GM12878 (cell line): ENCODE measurements at regions of chr3 and their contacts with region 1.

Region 1: GRCh38 chr3:27712136-27713077 is 9.7 kb downstream of the EOMES start:
- DNase-seq: no peak
- ATAC-seq: peak; percentile 86
- H3K4me3 ChIP-seq: peak overlapping the region; percentile 71
- H3K27ac ChIP-seq: no peak overlapping the region
- H3K4me1 ChIP-seq: no peaks in the 10 kb centered on the region
- H3K27me3 ChIP-seq: peaks cover 2 to 24% of the 10 kb centered on the region in 2 experiments
- CTCF ChIP-seq: peak; percentile 69 to 88 (median 84)
- EP300 ChIP-seq: no peak; a peak in 1 of 4 replicates
- POLR2A ChIP-seq: no peak
- RAD21 ChIP-seq: peak; percentile 87

Region 2: GRCh38 chr3:27681245-27681748 is 31.1 kb before region 1 on chr3:
- CTCF ChIA-PET with region 1: interaction called, 11 read pairs
- POLR2A ChIA-PET with region 1: interaction called, 3 read pairs
- RAD21 ChIA-PET with region 1: interaction called, 10 read pairs
- SMC1A ChIA-PET with region 1: interaction called, 15 read pairs
- in situ Hi-C with region 1: no loop called
- intact Hi-C with region 1: no loop called
- DNase-seq: peak; percentile 38
- ATAC-seq: peak; percentile 87
- H3K4me3 ChIP-seq: no peak overlapping the region
- H3K27ac ChIP-seq: no peak overlapping the region
- H3K4me1 ChIP-seq: no peaks in the 10 kb centered on the region
- H3K27me3 ChIP-seq: no peaks in the 10 kb centered on the region
- CTCF ChIP-seq: peak; percentile 47 to 79 (median 61)
- EP300 ChIP-seq: no peak
- POLR2A ChIP-seq: no peak
- RAD21 ChIP-seq: peak; percentile 91

Region 3: DNA sequence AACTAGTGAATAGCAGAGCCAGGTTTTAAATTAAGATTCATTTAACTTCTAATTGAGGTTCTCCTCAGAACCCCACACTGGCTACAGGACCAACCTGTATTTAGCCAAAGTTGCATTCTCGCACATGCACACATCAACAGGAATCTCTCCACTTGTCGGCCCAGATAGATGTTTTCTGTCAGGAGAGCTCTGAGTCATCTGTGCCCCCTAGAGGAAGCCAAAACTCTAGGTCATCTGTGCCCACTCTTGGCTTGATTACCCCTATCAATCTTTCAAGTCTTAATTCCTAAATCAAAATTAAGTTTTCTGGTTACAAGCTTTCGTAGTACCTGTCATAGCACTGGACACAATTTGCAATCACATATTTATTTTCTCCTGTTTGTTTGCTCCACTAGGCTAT is 114.6 kb after region 1 on chr3:
- CTCF ChIA-PET with region 1: interaction called, 4 read pairs
- POLR2A ChIA-PET with region 1: no interaction called
- RAD21 ChIA-PET with region 1: interaction called, 10 read pairs
- SMC1A ChIA-PET with region 1: interaction called, 3 read pairs
- in situ Hi-C with region 1: no loop called
- intact Hi-C with region 1: no loop called
- DNase-seq: no peak
- ATAC-seq: peak; percentile 48; the same call in 2 of the 3 replicates
- H3K4me3 ChIP-seq: no peak overlapping the region
- H3K27ac ChIP-seq: no peak overlapping the region
- H3K4me1 ChIP-seq: no peaks in the 10 kb centered on the region
- H3K27me3 ChIP-seq: no peaks in the 10 kb centered on the region
- CTCF ChIP-seq: no peak; a peak in 1 of 6 replicates
- EP300 ChIP-seq: no peak
- POLR2A ChIP-seq: no peak
- RAD21 ChIP-seq: no peak

Region 4: DNA sequence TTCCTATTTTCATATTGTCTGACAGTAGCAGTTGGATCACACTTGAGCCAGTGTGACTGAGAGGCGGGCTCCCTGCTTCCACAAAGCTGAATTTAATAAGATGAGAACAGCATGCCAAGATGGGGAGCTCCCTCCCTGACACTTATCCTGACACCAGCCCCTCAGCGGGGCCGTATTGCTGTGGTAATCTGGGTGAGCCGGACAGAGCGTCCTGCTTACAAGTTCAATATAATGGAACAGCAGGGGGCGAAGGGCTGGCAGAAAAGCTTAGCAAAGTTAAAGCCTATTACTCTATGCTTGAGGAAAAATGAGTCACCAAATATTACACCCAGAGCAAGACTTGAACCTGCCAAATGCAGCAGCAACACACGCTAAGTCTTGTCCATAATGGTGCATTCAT is 365.2 kb after region 1 on chr3:
- CTCF ChIA-PET with region 1: interaction called, 7 read pairs
- POLR2A ChIA-PET with region 1: no interaction called
- RAD21 ChIA-PET with region 1: interaction called, 12 read pairs
- SMC1A ChIA-PET with region 1: interaction called, 9 read pairs
- in situ Hi-C with region 1: no loop called
- intact Hi-C with region 1: no loop called
- DNase-seq: no peak
- ATAC-seq: no peak
- H3K4me3 ChIP-seq: no peak overlapping the region
- H3K27ac ChIP-seq: no peak overlapping the region
- H3K4me1 ChIP-seq: no peaks in the 10 kb centered on the region
- H3K27me3 ChIP-seq: no peaks in the 10 kb centered on the region
- CTCF ChIP-seq: no peak
- EP300 ChIP-seq: no peak
- POLR2A ChIP-seq: no peak
- RAD21 ChIP-seq: no peak

Region 5: DNA sequence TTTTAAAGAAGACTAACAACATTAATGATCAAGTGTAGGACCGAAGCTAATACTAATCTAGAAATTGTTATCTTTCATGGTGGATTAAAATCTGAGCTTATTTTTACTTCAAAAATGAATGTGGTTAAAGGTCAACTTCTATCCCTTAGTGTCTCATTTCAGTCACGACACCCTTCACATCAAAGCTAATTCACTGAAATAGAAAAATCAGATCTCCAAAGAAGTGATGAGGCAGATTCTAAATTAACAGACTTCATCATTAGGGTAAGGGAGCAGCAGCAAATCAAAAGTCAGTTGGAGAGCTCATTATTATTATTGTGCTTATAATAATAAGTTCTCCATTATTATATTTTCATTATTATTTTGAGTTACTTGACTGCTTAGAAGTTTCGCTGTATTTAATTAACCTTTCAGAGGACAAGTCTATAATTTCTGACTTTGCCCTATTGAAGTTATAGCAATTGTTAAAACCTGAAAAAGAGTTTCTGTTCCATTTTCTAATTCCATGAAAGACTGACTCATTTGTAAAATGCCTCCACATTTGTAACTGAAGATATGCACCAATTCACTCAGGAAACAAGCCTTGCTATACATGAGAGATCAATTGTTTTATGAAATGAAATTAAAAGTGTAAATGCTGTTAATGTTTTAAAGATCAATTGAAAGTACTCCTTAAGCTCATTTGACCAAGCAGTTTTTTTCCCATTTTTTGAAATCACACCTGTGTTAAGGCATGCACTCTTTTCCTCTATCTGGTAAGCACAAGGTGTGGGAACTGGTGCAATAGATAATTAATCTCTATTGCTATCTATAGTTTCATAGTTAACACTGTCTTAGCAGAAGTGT is 505.9 kb after region 1 on chr3:
- CTCF ChIA-PET with region 1: interaction called, 4 read pairs
- POLR2A ChIA-PET with region 1: interaction called, 3 read pairs
- RAD21 ChIA-PET with region 1: interaction called, 15 read pairs
- SMC1A ChIA-PET with region 1: interaction called, 10 read pairs
- in situ Hi-C with region 1: no loop called
- intact Hi-C with region 1: no loop called
- DNase-seq: peak; percentile 28
- ATAC-seq: peak; percentile 91
- H3K4me3 ChIP-seq: no peak overlapping the region
- H3K27ac ChIP-seq: no peak overlapping the region
- H3K4me1 ChIP-seq: no peaks in the 10 kb centered on the region
- H3K27me3 ChIP-seq: no peaks in the 10 kb centered on the region
- CTCF ChIP-seq: no peak
- EP300 ChIP-seq: peak; percentile 78 to 88; a peak in 3 of 4 replicates
- POLR2A ChIP-seq: no peak
- RAD21 ChIP-seq: no peak

Region 6: DNA sequence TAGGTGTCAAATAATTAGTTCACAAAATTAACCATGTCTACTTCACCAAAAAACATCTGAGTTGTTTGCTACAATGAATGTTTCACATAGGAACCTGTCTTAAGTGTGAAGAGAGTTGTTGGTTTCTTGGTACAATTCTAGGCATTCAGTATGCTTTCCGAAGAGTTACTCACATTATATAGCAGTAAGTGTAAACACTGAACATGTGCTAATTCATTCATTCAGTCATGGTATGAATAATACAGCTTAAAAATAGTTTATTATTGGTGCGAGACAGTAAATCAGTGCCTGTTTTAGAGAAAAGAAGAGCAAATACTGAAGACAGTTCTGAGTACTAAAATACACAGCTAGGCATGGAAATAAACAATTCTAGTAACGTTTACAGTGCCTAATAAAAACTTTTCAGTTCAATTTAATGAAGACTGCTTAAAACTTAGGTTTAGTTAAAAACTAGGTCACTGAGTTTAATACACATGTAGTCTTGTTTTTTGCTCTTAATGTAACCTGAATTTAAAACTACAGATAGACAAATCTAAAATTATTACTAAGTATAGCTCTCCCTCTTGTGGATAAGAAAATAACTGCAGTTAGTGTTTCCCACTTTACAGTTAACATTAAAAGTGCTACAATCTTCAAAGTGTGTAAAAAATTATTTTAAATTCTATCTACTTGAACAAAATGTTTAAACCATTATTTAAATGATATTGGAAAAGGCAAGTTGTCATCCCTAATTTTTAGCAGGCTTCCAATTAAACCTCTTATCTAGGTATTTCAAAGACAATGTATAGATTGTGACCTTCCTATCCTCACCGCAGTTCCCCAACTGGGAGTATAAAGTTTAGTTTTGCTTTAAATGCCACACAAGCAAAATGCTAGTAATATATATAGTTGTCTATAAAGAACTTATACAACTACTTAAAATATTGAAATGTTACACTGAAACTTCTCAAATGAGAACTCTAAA is 616.1 kb after region 1 on chr3:
- CTCF ChIA-PET with region 1: interaction called, 140 read pairs
- POLR2A ChIA-PET with region 1: interaction called, 14 read pairs
- RAD21 ChIA-PET with region 1: interaction called, 186 read pairs
- SMC1A ChIA-PET with region 1: interaction called, 139 read pairs
- in situ Hi-C with region 1: loop called (anchors 5 kb)
- intact Hi-C with region 1: loop called (anchors 1 kb)
- DNase-seq: no peak
- ATAC-seq: peak; percentile 32; the same call in 2 of the 3 replicates
- H3K4me3 ChIP-seq: no peak overlapping the region
- H3K27ac ChIP-seq: no peak overlapping the region
- H3K4me1 ChIP-seq: no peaks in the 10 kb centered on the region
- H3K27me3 ChIP-seq: no peaks in the 10 kb centered on the region
- CTCF ChIP-seq: peak in 2 of 3 experiments; percentile 28 to 60; a peak in 4 of 6 replicates
- EP300 ChIP-seq: no peak
- POLR2A ChIP-seq: no peak
- RAD21 ChIP-seq: peak; percentile 49